Endothelial cell of umbilical vein (primary cell): ENCODE measurements at regions of chr7 and their contacts with region 1.

Region 1: DNA sequence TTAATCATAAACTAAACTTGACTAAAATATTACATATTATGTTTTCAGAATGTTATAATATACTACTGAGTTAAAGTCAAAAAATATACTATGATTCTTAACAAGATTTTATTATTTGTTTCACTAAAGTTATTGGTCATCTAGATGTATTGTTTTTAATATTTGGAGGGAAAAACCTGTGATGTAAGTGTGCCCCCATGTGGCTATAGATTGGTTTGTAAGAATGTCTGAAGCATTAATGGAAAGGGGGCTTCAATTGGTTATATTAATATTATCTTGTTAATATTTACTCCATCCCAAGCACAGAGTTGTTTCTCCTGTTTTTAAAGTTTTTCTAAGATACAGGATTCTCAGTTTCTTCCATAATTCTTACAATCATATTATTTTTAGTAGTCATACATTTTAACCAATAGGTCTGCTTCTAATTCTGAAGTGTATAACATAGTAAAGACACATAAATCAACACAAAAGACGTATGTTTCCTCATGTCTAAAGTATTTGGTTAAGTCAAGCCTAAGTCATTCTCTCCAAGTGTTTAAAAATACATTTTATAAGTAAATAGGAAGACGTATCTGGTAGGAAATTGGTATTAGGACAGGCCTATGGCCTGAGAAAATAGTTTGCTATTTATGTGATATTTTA is 58.0 kb downstream of the GNAT3 start:
- DNase-seq: peak; percentile 59
- H3K4me3 ChIP-seq: no peak overlapping the region
- H3K27ac ChIP-seq: no peak overlapping the region
- H3K4me1 ChIP-seq: no peaks in the 10 kb centered on the region
- H3K27me3 ChIP-seq: no peaks in the 10 kb centered on the region
- CTCF ChIP-seq: peak in 1 of 2 donors; percentile 29
- POLR2A ChIP-seq: no peak

Region 2: DNA sequence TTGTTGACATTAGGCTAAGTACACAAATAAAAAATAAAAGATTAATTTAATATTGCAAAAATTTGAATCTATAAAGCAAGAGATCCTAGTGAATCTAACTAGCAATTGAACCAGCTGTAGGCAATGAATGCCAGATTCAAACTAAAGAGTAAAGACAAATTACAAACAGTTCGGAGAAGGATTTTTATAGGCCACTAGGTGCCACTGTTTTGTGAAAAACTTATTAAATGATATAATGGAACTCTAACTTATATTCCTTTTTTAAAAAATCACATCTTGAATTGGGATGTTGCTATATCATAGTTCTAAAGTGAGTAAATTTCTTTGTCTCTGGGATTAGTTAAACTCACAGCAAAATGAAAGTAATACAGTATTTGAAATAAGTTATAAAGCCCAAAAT is 358.3 kb before region 1 on chr7:
- CTCF ChIA-PET with region 1: interaction called, 4 read pairs
- POLR2A ChIA-PET with region 1: no interaction called
- dilution Hi-C with region 1: no loop called
- intact Hi-C with region 1: loop called (anchors 1 kb)
- DNase-seq: peak; percentile 37
- H3K4me3 ChIP-seq: no peak overlapping the region
- H3K27ac ChIP-seq: no peak overlapping the region
- H3K4me1 ChIP-seq: no peaks in the 10 kb centered on the region
- H3K27me3 ChIP-seq: no peaks in the 10 kb centered on the region
- CTCF ChIP-seq: peak; percentile 8 to 29
- POLR2A ChIP-seq: no peak

Region 3: GRCh38 chr7:80410081-80410480 is 43.7 kb before region 1 on chr7:
- CTCF ChIA-PET with region 1: no interaction called
- POLR2A ChIA-PET with region 1: no interaction called
- dilution Hi-C with region 1: no loop called
- intact Hi-C with region 1: no loop called
- DNase-seq: no peak
- H3K4me3 ChIP-seq: no peak overlapping the region
- H3K27ac ChIP-seq: no peak overlapping the region
- H3K4me1 ChIP-seq: no peaks in the 10 kb centered on the region
- H3K27me3 ChIP-seq: no peaks in the 10 kb centered on the region
- CTCF ChIP-seq: no peak
- POLR2A ChIP-seq: no peak

Region 4: DNA sequence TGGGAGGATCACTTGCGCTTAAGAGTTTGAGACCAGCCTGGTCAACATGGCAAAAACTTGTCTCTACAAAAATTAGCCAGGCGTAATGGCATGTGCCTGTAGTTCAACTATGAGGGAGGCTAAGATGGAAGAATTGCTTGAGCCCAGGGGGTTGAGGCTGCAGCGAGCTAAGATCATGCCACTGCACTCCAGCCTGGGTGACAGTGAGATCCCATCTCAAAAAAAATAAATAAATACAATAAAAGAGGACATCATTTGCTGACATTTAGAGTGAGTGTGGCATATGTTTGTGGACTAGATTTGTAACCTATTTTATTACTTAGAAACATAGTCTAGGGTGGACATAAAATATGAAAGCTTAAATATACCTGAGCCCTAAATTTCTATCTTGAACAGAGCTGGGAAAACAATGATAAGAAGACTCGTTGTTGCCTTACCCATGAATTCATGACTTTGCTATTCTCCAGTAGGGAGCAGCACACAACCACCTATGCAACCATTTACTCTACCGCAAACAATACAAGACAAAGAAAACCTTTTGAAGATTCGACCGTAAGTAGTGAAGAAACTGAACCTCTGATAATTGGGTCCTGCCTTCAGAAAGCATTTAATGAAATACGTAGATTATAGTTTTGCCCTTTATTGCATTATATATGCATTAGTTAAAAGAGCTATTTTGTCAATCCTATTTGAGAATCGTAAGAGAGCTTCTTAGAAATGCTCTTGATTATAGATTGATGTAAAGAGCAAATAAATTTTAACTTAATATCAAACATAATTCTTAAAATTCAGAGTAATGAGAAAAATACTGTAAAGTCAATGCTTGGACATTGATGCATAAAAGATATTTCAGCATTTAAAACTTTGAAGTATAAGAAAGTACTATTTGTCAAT is 25.4 kb before region 1 on chr7:
- CTCF ChIA-PET with region 1: interaction called, 9 read pairs
- POLR2A ChIA-PET with region 1: no interaction called
- dilution Hi-C with region 1: no loop called
- intact Hi-C with region 1: loop called (anchors 2 kb)
- DNase-seq: peak; percentile 63
- H3K4me3 ChIP-seq: no peak overlapping the region
- H3K27ac ChIP-seq: no peak overlapping the region
- H3K4me1 ChIP-seq: no peaks in the 10 kb centered on the region
- H3K27me3 ChIP-seq: no peaks in the 10 kb centered on the region
- CTCF ChIP-seq: peak; percentile 16 to 32
- POLR2A ChIP-seq: no peak